Calu3 (cell line): ENCODE measurements at regions of chr1 and their contacts with region 1.

Region 1: DNA sequence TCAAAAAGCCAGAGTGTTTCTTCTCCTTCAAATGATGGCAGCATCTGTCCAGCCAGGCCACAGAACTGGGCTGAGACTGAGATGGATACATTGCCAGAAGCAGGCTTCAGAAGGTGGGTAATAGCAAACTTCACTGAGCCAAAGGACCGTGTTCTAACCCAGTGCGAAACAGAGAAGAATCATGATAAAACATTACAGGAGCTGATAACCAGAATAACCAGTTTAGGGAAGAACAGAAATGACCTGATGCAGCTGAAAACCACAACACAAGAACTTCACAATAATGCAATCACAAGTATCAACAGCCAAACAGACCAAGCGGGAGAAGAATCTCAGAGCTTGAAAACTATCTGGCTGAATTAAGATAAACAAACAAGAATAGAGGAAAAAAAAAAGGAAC is 570.0 kb downstream of the KIF26B start:
- DNase-seq: no peak
- H3K4me3 Mint-ChIP-seq: no peak overlapping the region
- H3K27ac Mint-ChIP-seq: no peak overlapping the region
- H3K4me1 Mint-ChIP-seq: no peaks in the 10 kb centered on the region
- H3K27me3 Mint-ChIP-seq: no peaks in the 10 kb centered on the region
- CTCF ChIP-seq: no peak

Region 2: DNA sequence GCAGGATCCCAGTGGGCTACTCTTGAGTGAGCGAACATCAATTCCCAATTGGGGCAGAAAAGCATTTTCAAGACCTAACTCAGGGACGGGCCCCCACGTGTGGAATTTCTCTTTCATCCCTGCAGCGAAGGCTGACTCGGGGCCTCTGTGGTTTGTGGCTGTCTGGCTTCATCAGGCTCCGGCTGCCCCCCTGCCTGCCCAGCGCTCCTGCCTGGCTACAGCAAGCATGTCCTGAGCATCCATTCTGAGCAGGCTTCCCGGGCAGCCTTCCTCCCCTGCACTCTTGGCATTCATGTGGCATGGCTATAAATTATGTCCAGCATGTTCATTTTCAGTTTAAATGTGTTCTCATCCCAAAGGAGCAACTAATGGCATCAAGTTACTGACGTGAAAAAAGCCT is 18.1 kb after region 1 on chr1:
- CTCF ChIA-PET with region 1: no interaction called
- intact Hi-C with region 1: no loop called
- DNase-seq: no peak
- H3K4me3 Mint-ChIP-seq: no peak overlapping the region
- H3K27ac Mint-ChIP-seq: no peak overlapping the region
- H3K4me1 Mint-ChIP-seq: no peaks in the 10 kb centered on the region
- H3K27me3 Mint-ChIP-seq: no peaks in the 10 kb centered on the region
- CTCF ChIP-seq: no peak

Region 3: GRCh38 chr1:245754463-245754961 is 29.7 kb after region 1 on chr1:
- CTCF ChIA-PET with region 1: no interaction called
- intact Hi-C with region 1: no loop called
- DNase-seq: no peak
- H3K4me3 Mint-ChIP-seq: no peak overlapping the region
- H3K27ac Mint-ChIP-seq: no peak overlapping the region
- H3K4me1 Mint-ChIP-seq: no peaks in the 10 kb centered on the region
- H3K27me3 Mint-ChIP-seq: no peaks in the 10 kb centered on the region
- CTCF ChIP-seq: no peak

Region 4: GRCh38 chr1:246262281-246262680 is 537.5 kb after region 1 on chr1:
- CTCF ChIA-PET with region 1: interaction called, 10 read pairs
- intact Hi-C with region 1: no loop called
- DNase-seq: no peak
- H3K4me3 Mint-ChIP-seq: no peak overlapping the region
- H3K27ac Mint-ChIP-seq: no peak overlapping the region
- H3K4me1 Mint-ChIP-seq: no peaks in the 10 kb centered on the region
- H3K27me3 Mint-ChIP-seq: no peaks in the 10 kb centered on the region
- CTCF ChIP-seq: no peak